Activated CD8-positive, alpha-beta memory T cell treated with anti-CD3 and anti-CD28 coated beads, Interleukin-2, amount 10 ng/mL, durations not matched to agents 7 days and 5 days (primary cell): ENCODE measurements at regions of chr3 and their contacts with region 1.

Region 1: DNA sequence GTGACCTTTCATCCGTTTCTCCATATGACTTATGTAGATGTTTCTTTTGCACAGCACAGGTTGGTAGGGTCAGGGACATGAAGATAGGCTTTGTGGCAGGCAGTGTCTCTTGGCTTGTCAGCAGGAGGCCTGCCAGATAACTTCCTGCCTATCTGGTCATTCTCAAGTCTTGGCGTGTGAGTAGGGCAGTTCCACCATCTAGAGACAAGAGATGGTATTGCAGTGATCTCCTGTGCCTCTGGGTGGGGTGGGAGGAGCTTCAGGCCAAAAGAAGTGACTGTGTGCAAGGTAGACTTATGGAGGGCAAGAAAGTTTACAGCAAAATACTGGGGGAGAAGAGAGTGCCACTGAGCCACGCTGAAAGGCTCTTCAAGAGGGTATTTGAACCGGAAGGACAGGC is 11.0 kb downstream of the TEX264 start:
- DNase-seq: peak; percentile 91
- ATAC-seq: peak; percentile 84
- H3K4me3 Mint-ChIP-seq: peak overlapping the region; percentile 69
- H3K27ac Mint-ChIP-seq: peak overlapping the region; percentile 91
- H3K4me1 Mint-ChIP-seq: peaks cover 92% of the 10 kb centered on the region
- H3K27me3 Mint-ChIP-seq: no peaks in the 10 kb centered on the region

Region 2: GRCh38 chr3:51391075-51391567 is 291.0 kb before region 1 on chr3 and contains the start of gene RBM15B:
- CTCF ChIA-PET with region 1: interaction called, 28 read pairs
- DNase-seq: peak; percentile 98
- ATAC-seq: peak; percentile 93
- H3K4me3 Mint-ChIP-seq: peak within 1 kb of the TSS; percentile 85
- H3K27ac Mint-ChIP-seq: peak within 1 kb of the TSS; percentile 88
- H3K4me1 Mint-ChIP-seq: peaks cover 82% of the 10 kb centered on the region
- H3K27me3 Mint-ChIP-seq: no peaks in the 10 kb centered on the region
- total RNA-seq, gene RBM15B: 28.7 to 36.1 TPM

Region 3: GRCh38 chr3:51538459-51539290 is 143.4 kb before region 1 on chr3 and contains the start of gene RAD54L2:
- CTCF ChIA-PET with region 1: interaction called, 10 read pairs
- DNase-seq: peak; percentile 81
- ATAC-seq: peak; percentile 92
- H3K4me3 Mint-ChIP-seq: peak within 1 kb of the TSS; percentile 81
- H3K27ac Mint-ChIP-seq: peak within 1 kb of the TSS; percentile 84
- H3K4me1 Mint-ChIP-seq: peaks cover 32% of the 10 kb centered on the region
- H3K27me3 Mint-ChIP-seq: no peaks in the 10 kb centered on the region
- total RNA-seq, gene RAD54L2: 34.0 to 35.1 TPM

Region 4: GRCh38 chr3:51646091-51646490 is 36.0 kb before region 1 on chr3:
- CTCF ChIA-PET with region 1: interaction called, 24 read pairs
- DNase-seq: no peak
- ATAC-seq: no peak
- H3K4me3 Mint-ChIP-seq: no peak overlapping the region
- H3K27ac Mint-ChIP-seq: no peak overlapping the region
- H3K4me1 Mint-ChIP-seq: no peaks in the 10 kb centered on the region
- H3K27me3 Mint-ChIP-seq: no peaks in the 10 kb centered on the region

Region 5: DNA sequence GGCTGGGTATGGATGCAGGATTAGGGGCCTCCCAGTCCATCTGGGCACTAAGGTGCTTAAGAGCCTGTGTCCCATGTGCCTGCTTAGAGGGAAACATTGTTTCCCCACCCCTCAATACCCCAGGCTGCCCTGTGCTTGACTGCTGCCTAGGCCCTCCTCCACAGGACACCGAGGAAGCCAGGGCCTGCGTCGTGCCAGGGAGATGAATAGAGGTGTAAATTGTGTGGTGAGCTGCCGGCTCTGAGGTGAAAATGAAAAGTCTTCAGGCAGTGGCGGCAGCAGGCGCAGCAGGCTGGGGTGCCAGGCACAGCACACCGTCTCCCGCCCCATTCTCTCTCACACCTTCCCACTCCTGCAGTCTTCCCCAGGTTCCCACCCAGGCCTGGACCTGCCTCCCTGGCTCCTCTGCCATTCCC is 10.9 kb after region 1 on chr3:
- CTCF ChIA-PET with region 1: interaction called, 17 read pairs
- DNase-seq: no peak
- ATAC-seq: no peak
- H3K4me3 Mint-ChIP-seq: no peak overlapping the region
- H3K27ac Mint-ChIP-seq: no peak overlapping the region
- H3K4me1 Mint-ChIP-seq: peaks cover 10% of the 10 kb centered on the region
- H3K27me3 Mint-ChIP-seq: no peaks in the 10 kb centered on the region